ENCODE measurements at regions of chr4 and their contacts with region 1.

Region 1: GRCh38 chr4:123396307-123397143 is at the start of gene SPRY1:
- DNase-seq: peak; percentile 85
- ATAC-seq: peak; percentile 83 to 90
- total RNA-seq, gene SPRY1: 59.6 to 89.9 TPM

Region 2: DNA sequence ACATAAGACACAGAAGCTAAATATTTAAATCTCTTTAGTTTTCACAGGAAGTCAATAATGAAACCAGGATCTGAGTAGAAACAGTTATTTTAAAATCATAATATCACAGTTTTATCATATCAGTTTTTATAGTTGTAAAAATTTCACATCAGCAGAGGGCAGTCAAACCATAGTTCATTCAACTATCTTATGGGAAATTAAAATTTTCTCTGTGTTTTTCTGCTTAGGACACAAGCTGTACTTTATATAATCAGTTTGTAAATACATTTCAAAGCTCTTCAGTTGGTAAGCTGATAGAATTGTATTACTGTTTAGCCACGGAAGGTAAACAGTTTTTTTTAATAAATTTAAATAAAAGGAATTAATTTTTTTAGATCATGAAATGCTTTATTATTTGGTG is 269.3 kb before region 1 on chr4:
- intact Hi-C with region 1: loop called in 1 of 2 experiments (anchors 10 kb)
- DNase-seq: no peak
- ATAC-seq: peak in 1 of 2 donors; percentile 27

Region 3: DNA sequence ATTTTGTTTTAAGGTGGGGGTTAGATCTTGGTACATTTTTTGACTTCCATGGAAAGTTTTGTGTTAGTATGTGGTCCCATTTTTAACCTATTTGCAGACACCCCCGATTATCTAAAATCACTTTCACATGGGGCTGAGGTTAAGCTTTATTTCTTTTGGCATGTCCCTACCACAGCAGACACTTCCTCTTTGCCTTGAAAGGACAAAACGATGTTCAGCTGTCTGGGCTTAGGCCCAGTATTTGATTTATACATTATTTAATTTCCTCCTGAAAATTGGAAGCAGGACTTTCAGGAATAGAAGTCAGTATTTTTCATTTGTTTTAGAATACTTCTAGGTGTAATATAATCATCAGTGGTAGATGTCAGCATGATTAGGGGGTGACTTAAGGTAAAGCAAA is 112.4 kb before region 1 on chr4:
- intact Hi-C with region 1: no loop called
- DNase-seq: no peak
- ATAC-seq: peak in 1 of 2 donors; percentile 35

Region 4: GRCh38 chr4:123461996-123462395 is 65.5 kb after region 1 on chr4:
- intact Hi-C with region 1: no loop called
- DNase-seq: no peak
- ATAC-seq: no peak

Region 5: DNA sequence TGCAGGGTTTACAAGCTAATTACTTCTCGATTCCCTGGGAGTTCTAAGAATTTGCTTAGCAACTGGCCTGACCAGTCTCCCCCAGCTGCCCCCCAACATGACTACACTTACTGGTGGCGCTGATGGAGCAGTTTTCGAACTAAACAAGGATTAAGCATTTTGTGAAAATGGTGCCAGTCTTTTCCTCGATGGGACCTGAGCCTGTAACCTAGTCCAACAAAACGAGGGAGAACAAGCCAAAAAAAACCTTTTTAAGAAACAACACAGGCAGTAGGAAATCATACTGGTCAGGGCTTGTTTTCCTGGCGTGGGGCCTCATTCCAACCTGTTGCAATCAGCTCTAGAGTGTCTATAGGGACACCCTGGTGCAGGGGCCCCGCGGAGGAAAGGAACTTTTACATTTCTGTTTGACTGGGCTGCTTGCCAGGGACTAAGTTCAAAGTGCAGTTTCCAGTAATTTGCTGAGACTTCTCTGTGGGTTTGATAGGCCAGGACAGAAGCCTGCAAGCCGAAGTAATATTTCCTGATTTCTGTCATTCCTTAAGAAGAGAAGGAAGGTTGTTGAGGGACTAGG is 158.8 kb after region 1 on chr4:
- intact Hi-C with region 1: loop called in 1 of 2 experiments (anchors 10 kb)
- DNase-seq: peak; percentile 91
- ATAC-seq: peak; percentile 91 to 92

Region 6: DNA sequence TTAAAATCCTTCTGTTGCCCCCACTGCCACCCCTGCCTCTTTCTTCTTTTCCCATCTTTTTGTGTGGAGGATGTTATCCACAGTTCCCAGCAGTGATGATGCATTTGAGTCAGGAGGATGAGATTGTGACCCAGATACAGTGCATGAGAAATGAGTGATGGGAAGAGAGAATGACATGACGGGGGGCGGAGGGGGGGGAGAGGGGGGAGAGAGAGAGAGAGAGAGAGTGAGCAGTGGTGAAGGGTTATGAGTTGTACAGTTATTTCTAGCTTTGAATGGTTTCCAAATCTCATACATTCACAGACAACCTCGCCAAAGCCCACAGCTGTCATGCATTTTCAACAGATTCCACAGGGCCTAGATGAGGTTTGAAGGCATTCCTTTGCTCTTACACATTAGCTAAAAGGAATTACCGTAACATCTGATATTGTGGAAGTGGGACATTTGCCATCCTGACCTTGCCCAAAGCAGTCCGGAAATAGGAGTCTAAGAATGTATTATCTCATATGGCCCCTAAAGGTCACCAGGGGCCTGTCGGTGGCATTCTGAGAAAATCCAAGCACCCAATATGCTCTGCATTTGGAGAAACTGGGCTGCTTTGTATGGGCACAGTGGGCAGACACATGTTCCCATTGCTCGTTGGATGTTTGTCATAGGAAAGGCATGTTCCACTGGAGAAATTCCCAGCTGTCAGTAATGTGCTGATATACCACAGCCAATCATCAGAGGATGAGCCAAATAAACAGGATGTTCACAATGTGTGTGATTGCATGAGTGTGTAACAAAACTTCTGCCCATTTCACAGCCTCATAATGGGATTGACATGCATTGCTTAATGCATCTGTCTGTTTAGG is 435.9 kb after region 1 on chr4:
- intact Hi-C with region 1: loop called in 1 of 2 experiments (anchors 5 kb)
- DNase-seq: peak; percentile 70
- ATAC-seq: peak; percentile 91 to 95

Region 7: DNA sequence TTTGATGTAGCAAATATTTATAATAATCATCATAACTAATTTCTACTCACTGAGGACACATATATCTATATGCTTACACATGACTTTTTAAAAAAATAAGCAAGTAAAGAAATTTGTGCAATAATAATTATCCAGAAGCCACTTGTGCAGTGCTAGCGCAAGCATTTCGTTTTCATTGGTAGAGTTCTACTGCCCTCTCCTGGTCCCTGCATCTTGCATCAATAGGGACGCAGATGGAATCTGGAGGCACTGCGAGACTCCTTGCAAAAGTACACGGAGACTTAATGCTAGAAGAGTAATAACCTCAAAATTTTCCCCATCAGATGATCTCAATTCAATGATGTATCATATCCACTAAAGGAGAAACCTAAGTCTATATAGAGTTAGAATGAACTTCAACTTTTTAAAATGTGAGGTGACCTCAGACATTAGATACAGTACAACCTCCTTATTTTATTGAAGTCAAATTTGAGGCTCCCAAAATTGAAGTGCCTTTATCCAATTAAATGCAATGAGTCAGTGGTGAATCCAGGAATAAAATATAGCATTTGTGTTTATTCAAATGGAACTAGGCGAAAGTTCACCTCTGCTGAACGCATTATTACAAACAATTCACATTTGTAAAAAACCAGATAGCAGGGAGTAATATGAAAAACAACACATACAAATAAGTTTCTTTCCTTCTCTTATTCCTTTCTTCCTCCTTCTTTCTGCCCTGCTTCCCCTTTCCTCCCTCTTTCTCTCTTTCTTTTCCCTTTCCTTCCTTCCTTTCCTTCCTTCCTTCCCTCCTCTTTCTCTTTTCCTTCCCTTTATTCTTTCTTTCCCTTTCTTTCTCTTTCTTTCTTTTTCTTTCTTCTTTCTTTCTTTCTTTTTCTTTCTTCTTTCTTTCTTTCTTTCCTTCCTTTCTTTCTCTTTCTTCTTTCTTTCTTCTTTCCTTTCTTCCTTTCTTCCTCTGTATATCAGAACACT is 866.0 kb after region 1 on chr4:
- intact Hi-C with region 1: loop called in 1 of 2 experiments (anchors 10 kb)
- DNase-seq: peak; percentile 43
- ATAC-seq: peak; percentile 87 to 92